Activated CD4-positive, alpha-beta memory T cell treated with anti-CD3 and anti-CD28 coated beads, Interleukin-2, amount 10 ng/mL, durations not matched to agents 7 days and 5 days (primary cell): ENCODE measurements at regions of chr20 and their contacts with region 1.

Region 1: GRCh38 chr20:4720041-4720976 is 1.4 kb upstream of the PRND start:
- DNase-seq: peak; percentile 81
- H3K4me3 Mint-ChIP-seq: no peak overlapping the region
- H3K27ac Mint-ChIP-seq: peak overlapping the region; percentile 6
- H3K4me1 Mint-ChIP-seq: peaks cover 11% of the 10 kb centered on the region
- H3K27me3 Mint-ChIP-seq: peaks cover 5% of the 10 kb centered on the region

Region 2: GRCh38 chr20:4601630-4602296 is 118.5 kb before region 1 on chr20:
- CTCF ChIA-PET with region 1: interaction called, 26 read pairs
- POLR2A ChIA-PET with region 1: no interaction called
- DNase-seq: no peak
- H3K4me3 Mint-ChIP-seq: no peak overlapping the region
- H3K27ac Mint-ChIP-seq: no peak overlapping the region
- H3K4me1 Mint-ChIP-seq: no peaks in the 10 kb centered on the region
- H3K27me3 Mint-ChIP-seq: peaks cover 53% of the 10 kb centered on the region

Region 3: GRCh38 chr20:4607287-4607713 is 113.0 kb before region 1 on chr20:
- CTCF ChIA-PET with region 1: interaction called, 26 read pairs
- POLR2A ChIA-PET with region 1: no interaction called
- DNase-seq: peak; percentile 60
- H3K4me3 Mint-ChIP-seq: no peak overlapping the region
- H3K27ac Mint-ChIP-seq: no peak overlapping the region
- H3K4me1 Mint-ChIP-seq: no peaks in the 10 kb centered on the region
- H3K27me3 Mint-ChIP-seq: peaks cover 27% of the 10 kb centered on the region

Region 4: GRCh38 chr20:4613718-4614620 is 106.3 kb before region 1 on chr20:
- CTCF ChIA-PET with region 1: interaction called, 50 read pairs
- POLR2A ChIA-PET with region 1: interaction called, 3 read pairs
- DNase-seq: peak; percentile 83
- H3K4me3 Mint-ChIP-seq: no peak overlapping the region
- H3K27ac Mint-ChIP-seq: no peak overlapping the region
- H3K4me1 Mint-ChIP-seq: peaks cover 10% of the 10 kb centered on the region
- H3K27me3 Mint-ChIP-seq: peaks cover 7% of the 10 kb centered on the region